Sigmoid colon (tissue), 7 donors: ENCODE measurements at regions of chr5 and their contacts with region 1.

Region 1: GRCh38 chr5:59275510-59276324 is 617.8 kb downstream of the PDE4D start:
- DNase-seq: peak; percentile 89
- H3K4me3 ChIP-seq: peak overlapping the region; percentile 47 to 59 (median 56)
- H3K27ac ChIP-seq: peak overlapping the region; percentile 87 to 90 (median 90)
- H3K4me1 ChIP-seq: peaks cover 0 to 34% (median 26%) of the 10 kb centered on the region in 4 donors
- H3K27me3 ChIP-seq: no peaks in the 10 kb centered on the region
- CTCF ChIP-seq: no peak
- EP300 ChIP-seq: peak in 2 of 4 donors; percentile 11 to 31
- POLR2A ChIP-seq: no peak

Region 2: GRCh38 chr5:59206132-59206581 is 69.6 kb before region 1 on chr5:
- intact Hi-C with region 1: loop called (anchors 5 kb)
- DNase-seq: no peak
- H3K4me3 ChIP-seq: no peak overlapping the region
- H3K27ac ChIP-seq: peak overlapping the region; percentile 58 to 81 (median 72)
- H3K4me1 ChIP-seq: peaks cover 0 to 75% (median 59%) of the 10 kb centered on the region in 4 donors
- H3K27me3 ChIP-seq: no peaks in the 10 kb centered on the region
- CTCF ChIP-seq: no peak
- EP300 ChIP-seq: peak in 1 of 4 donors; percentile 13
- POLR2A ChIP-seq: no peak

Region 3: GRCh38 chr5:59317023-59317773 is 41.5 kb after region 1 on chr5:
- intact Hi-C with region 1: loop called (anchors 5 kb)
- DNase-seq: peak; percentile 78
- H3K4me3 ChIP-seq: no peak overlapping the region
- H3K27ac ChIP-seq: peak overlapping the region; percentile 61 to 89 (median 80)
- H3K4me1 ChIP-seq: peaks cover 0 to 85% (median 67%) of the 10 kb centered on the region in 4 donors
- H3K27me3 ChIP-seq: no peaks in the 10 kb centered on the region
- CTCF ChIP-seq: no peak
- EP300 ChIP-seq: peak; percentile 93 to 100 (median 99)
- POLR2A ChIP-seq: no peak

Region 4: GRCh38 chr5:59356813-59357380 is 81.2 kb after region 1 on chr5:
- intact Hi-C with region 1: loop called (anchors 2 kb)
- DNase-seq: peak; percentile 67
- H3K4me3 ChIP-seq: no peak overlapping the region
- H3K27ac ChIP-seq: peak overlapping the region; percentile 63 to 82 (median 72)
- H3K4me1 ChIP-seq: peaks cover 0 to 86% (median 58%) of the 10 kb centered on the region in 4 donors
- H3K27me3 ChIP-seq: no peaks in the 10 kb centered on the region
- CTCF ChIP-seq: no peak
- EP300 ChIP-seq: no peak
- POLR2A ChIP-seq: no peak

Region 5: DNA sequence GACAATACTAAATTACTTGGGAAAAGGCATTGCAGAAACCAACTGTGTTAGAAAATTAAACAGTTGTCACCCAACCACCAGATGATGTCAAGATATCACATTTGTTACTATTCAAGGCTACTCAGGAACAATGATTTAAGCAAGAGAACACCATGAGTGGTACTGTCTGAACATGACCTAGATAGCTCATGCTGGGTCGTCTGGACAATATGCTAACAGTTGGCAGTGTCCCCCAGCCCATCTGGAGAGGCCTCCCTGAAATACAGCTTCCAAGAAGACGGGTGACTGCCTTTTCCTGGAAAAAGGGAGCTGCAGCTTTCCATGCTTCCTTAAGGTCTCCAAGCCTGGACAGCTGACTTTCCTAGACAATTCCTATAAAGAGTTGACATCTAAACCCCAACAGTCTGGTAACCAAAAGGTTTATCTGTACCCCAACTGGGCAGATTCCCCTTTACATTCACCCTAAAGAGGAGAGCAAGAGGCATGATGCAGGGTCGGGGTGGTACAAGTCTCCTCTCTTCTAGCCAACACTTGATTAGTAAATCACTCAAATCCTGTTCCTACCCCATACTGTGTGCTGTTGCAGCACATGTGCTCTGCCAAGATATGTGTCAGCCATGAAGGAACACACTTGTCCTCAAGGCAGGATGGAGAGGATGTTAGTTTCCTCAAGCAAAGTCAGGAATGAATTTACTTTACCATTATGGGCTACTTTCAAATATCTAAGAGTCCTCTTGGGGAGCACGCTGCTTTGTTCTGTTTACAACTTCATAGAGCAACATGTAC is 184.8 kb after region 1 on chr5:
- intact Hi-C with region 1: no loop called
- DNase-seq: no peak
- H3K4me3 ChIP-seq: no peak overlapping the region
- H3K27ac ChIP-seq: no peak overlapping the region
- H3K4me1 ChIP-seq: peaks cover 0 to 7% (median 5%) of the 10 kb centered on the region in 4 donors
- H3K27me3 ChIP-seq: no peaks in the 10 kb centered on the region
- CTCF ChIP-seq: no peak
- EP300 ChIP-seq: no peak
- POLR2A ChIP-seq: no peak